ENCODE measurements at regions of chr16 and their contacts with region 1.

Region 1: GRCh38 chr16:66947302-66948065 is 12.2 kb downstream of the CES2 start:
- H3K4me3 Mint-ChIP-seq: peak overlapping the region; percentile 75
- H3K27ac Mint-ChIP-seq: no peak overlapping the region
- H3K4me1 Mint-ChIP-seq: peaks cover 26% of the 10 kb centered on the region
- H3K27me3 Mint-ChIP-seq: peaks cover 52% of the 10 kb centered on the region

Region 2: DNA sequence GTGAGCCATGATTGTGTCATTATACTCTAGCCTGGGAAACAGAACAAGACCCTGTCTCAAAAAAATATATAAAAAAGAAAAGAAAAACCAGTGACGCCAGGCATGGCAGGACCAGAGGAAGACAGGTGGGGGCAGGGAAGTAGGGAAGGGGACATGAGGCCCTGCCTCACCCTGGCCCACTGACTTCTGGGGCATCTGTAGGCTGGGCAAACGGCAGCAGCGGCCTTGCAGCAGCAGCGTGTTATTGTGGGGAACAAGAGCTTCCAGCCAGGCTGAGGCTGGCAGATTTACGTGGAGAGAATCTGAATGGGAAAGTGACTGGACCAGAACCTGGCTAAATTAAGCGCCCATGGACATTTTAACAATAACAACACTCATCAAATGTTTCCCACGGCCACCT is 270.3 kb before region 1 on chr16:
- intact Hi-C with region 1: no loop called
- H3K4me3 Mint-ChIP-seq: no peak overlapping the region
- H3K27ac Mint-ChIP-seq: no peak overlapping the region
- H3K4me1 Mint-ChIP-seq: no peaks in the 10 kb centered on the region
- H3K27me3 Mint-ChIP-seq: no peaks in the 10 kb centered on the region

Region 3: GRCh38 chr16:66740010-66740409 is 207.5 kb before region 1 on chr16:
- intact Hi-C with region 1: no loop called
- H3K4me3 Mint-ChIP-seq: peak overlapping the region; percentile 49
- H3K27ac Mint-ChIP-seq: peak overlapping the region; percentile 80
- H3K4me1 Mint-ChIP-seq: peaks cover 33% of the 10 kb centered on the region
- H3K27me3 Mint-ChIP-seq: no peaks in the 10 kb centered on the region

Region 4: GRCh38 chr16:67170168-67170947 is 222.9 kb after region 1 on chr16 and contains the start of gene NOL3:
- intact Hi-C with region 1: no loop called
- H3K4me3 Mint-ChIP-seq: peak within 1 kb of the TSS; percentile 72
- H3K27ac Mint-ChIP-seq: peak within 1 kb of the TSS; percentile 88
- H3K4me1 Mint-ChIP-seq: peaks cover 87% of the 10 kb centered on the region
- H3K27me3 Mint-ChIP-seq: peaks cover 78% of the 10 kb centered on the region

Region 5: DNA sequence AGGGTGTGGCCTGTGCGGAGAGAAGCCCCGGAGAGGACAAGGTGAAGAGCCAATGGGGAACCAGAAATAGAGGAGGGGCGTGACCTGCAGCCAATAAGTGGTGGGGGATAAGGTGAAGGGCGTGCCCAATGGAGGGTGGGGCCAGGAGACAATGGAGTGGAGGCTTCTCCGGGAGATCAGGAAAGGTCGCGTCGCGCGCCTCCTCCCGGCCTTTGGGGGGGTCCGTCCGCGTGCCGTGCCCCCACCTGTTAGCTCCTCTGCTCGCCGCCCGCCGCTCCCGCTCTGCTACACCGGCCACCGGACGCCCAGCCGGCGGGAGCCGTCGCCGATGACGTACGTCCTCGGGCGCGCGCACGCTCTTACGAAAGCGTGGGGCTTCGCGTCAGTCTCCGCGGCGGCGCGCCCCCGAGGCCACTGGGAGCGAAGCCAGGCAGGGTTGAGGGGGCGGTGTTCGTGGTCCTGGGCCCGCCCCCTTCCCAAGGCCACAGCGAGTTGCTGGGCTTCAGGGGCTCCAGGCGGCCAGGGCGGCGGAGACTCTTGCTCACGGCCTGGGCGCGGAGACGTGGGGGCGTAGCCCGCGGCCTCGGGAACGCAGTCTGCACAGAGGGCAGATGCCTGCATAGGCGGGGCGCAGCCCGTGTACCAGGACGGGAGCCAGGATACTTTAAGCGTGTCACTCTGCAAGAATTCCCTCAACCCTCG is 236.3 kb after region 1 on chr16 and contains the start of gene MATCAP1:
- intact Hi-C with region 1: loop called (anchors 5 kb)
- H3K4me3 Mint-ChIP-seq: no peak within 1 kb of the TSS
- H3K27ac Mint-ChIP-seq: no peak within 1 kb of the TSS
- H3K4me1 Mint-ChIP-seq: peaks cover 18% of the 10 kb centered on the region
- H3K27me3 Mint-ChIP-seq: peaks cover 32% of the 10 kb centered on the region

Measured in dendritic cell treated with granulocyte-macrophage colony-stimulating factor and Interleukin-4, amounts not matched to agents 40 ng/mL and 50 ng/mL, for 4 days (primary cell).